ENCODE measurements at regions of chr6 and their contacts with region 1.

Region 1: GRCh38 chr6:89371849-89372505 is 19.5 kb upstream of the UBE2J1 start:
- DNase-seq: peak; percentile 89
- ATAC-seq: peak; percentile 82
- H3K4me3 Mint-ChIP-seq: no peak overlapping the region
- H3K27ac Mint-ChIP-seq: peak overlapping the region; percentile 78
- H3K4me1 Mint-ChIP-seq: peaks cover 43% of the 10 kb centered on the region
- H3K27me3 Mint-ChIP-seq: peaks cover 17% of the 10 kb centered on the region

Region 2: DNA sequence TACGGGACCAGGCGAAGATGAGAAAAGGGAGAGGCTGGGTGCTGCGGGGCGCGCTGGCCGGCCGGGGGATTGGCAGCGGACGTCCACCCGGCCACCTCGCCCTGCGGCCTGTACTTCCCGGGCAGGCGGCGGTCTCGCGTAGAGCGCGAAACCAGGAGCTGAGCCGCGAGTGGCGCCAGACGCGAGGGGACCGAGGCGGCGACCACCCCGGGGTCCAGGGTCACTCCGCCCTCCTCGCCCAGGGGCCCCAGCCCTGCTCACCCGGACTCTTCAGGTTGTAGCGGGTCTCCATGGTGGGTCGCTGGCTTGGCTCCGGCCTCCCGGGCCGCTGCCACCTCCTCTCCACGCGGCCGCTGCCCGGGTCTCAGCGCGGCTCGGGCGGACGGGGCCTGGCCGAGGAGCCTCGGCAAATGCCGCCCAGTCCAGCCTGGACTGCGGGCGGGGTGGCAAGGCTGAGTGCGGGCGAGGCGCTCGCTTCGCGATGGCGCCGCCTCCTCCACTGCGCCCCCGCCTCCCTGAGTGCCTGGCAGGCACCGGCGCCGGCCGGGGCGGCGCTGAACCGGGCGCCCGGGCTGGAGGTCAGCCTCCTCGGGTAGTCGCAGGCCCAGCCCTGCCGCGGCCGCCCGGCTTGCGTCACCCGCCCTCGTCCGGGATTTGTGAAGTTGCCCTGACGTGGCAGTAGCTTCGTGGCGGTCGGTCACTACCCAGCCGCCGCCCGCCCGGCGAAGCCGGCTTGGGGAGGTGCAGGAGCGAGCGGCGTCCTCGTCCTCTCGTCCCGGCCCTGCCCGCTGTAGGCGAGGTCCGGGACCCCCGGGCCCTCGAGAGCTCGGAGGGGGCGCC is 19.5 kb before region 1 on chr6 and contains the start of gene UBE2J1:
- CTCF ChIA-PET with region 1: interaction called, 119 read pairs
- DNase-seq: peak; percentile 86
- ATAC-seq: peak; percentile 88
- H3K4me3 Mint-ChIP-seq: peak within 1 kb of the TSS; percentile 95
- H3K27ac Mint-ChIP-seq: peak within 1 kb of the TSS; percentile 94
- H3K4me1 Mint-ChIP-seq: peaks cover 65% of the 10 kb centered on the region
- H3K27me3 Mint-ChIP-seq: no peaks in the 10 kb centered on the region
- total RNA-seq, gene UBE2J1: 26.1 to 31.2 TPM

Region 3: DNA sequence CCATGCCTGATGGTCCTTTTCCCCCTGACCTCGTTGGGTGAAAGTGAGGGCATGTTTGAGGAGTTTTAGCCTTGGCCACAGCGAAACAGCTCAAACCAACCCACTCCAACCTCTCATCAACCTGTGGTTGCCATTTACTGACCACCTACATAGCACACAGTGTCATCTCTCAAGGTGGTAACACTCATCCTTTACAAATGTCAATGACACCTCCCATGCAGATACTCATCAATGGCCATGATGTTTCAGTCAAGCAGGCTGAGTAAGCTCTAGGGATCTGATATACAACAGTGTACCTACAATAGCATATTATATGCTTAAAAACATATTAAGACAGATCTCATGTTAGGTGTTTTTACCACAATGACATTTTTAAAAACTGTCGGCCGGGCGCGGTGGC is 30.8 kb after region 1 on chr6:
- CTCF ChIA-PET with region 1: interaction called, 10 read pairs
- DNase-seq: no peak
- ATAC-seq: no peak
- H3K4me3 Mint-ChIP-seq: no peak overlapping the region
- H3K27ac Mint-ChIP-seq: no peak overlapping the region
- H3K4me1 Mint-ChIP-seq: peaks cover 9% of the 10 kb centered on the region
- H3K27me3 Mint-ChIP-seq: peaks cover 5% of the 10 kb centered on the region

Region 4: GRCh38 chr6:89432875-89433251 is 60.9 kb after region 1 on chr6 and contains the start of gene ANKRD6:
- CTCF ChIA-PET with region 1: interaction called, 32 read pairs
- DNase-seq: peak; percentile 84
- ATAC-seq: peak; percentile 95
- H3K4me3 Mint-ChIP-seq: peak within 1 kb of the TSS; percentile 69
- H3K27ac Mint-ChIP-seq: peak within 1 kb of the TSS; percentile 12
- H3K4me1 Mint-ChIP-seq: peaks cover 16% of the 10 kb centered on the region
- H3K27me3 Mint-ChIP-seq: peaks cover 49% of the 10 kb centered on the region
- total RNA-seq, gene ANKRD6: 1.7 to 4.5 TPM

Region 5: GRCh38 chr6:89638320-89639195 is 266.6 kb after region 1 on chr6 and contains the start of gene LYRM2:
- CTCF ChIA-PET with region 1: interaction called, 15 read pairs
- DNase-seq: peak; percentile 95
- ATAC-seq: peak; percentile 98
- H3K4me3 Mint-ChIP-seq: peak within 1 kb of the TSS; percentile 87
- H3K27ac Mint-ChIP-seq: peak within 1 kb of the TSS; percentile 98
- H3K4me1 Mint-ChIP-seq: peaks cover 32% of the 10 kb centered on the region
- H3K27me3 Mint-ChIP-seq: no peaks in the 10 kb centered on the region
- total RNA-seq, gene LYRM2: 28.9 to 30.1 TPM

Region 6: DNA sequence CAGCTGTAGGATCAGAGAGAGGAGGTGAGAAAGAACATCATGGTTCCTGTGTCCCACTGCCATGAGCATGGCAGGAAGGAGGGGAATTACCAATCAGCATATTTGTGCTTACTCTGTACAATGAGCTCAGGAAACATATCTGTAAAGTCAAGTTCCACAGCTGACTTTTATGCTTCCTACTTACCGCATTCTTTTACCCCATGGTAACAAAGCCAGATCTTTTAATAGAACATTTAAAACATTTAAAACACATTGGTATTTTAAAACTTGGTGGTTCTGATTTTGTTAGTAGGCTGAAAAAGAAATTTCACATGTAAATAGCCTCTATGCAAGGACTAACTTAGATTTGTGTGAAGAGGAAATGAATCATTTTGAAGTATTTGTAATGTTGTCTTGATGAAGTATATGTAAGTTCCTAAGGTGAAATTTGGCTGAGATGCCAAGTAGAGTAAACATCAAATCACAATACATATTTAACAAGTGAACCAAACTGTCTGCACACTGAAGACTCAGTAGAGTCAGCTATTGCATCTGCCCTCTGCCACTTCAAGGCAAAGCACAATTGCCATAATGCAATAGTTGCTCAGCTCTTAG is 637.0 kb after region 1 on chr6:
- CTCF ChIA-PET with region 1: no interaction called
- DNase-seq: no peak
- ATAC-seq: peak; percentile 65
- H3K4me3 Mint-ChIP-seq: no peak overlapping the region
- H3K27ac Mint-ChIP-seq: peak overlapping the region; percentile 50
- H3K4me1 Mint-ChIP-seq: peaks cover 24% of the 10 kb centered on the region
- H3K27me3 Mint-ChIP-seq: no peaks in the 10 kb centered on the region

Measured in activated CD8-positive, alpha-beta memory T cell treated with anti-CD3 and anti-CD28 coated beads, Interleukin-2, amount 10 ng/mL, durations not matched to agents 7 days and 5 days (primary cell).